Aorta (tissue), 5 donors: ENCODE measurements at regions of chr12 and their contacts with region 1.

Region 1: GRCh38 chr12:9745199-9745598 is 12.3 kb upstream of the CLECL1 start:
- DNase-seq: no peak
- ATAC-seq: no peak
- H3K4me3 ChIP-seq: no peak overlapping the region
- H3K27ac ChIP-seq: no peak overlapping the region
- H3K4me1 ChIP-seq: no peaks in the 10 kb centered on the region
- H3K27me3 ChIP-seq: no peaks in the 10 kb centered on the region

Region 2: GRCh38 chr12:9797722-9798619 is 52.8 kb after region 1 on chr12:
- intact Hi-C with region 1: no loop called
- DNase-seq: no peak
- ATAC-seq: no peak
- H3K4me3 ChIP-seq: no peak overlapping the region
- H3K27ac ChIP-seq: no peak overlapping the region
- H3K4me1 ChIP-seq: peaks cover 0 to 1% of the 10 kb centered on the region in 2 donors
- H3K27me3 ChIP-seq: no peaks in the 10 kb centered on the region

Region 3: GRCh38 chr12:9925708-9926393 is 180.7 kb after region 1 on chr12:
- intact Hi-C with region 1: loop called in 1 of 2 experiments (anchors 5 kb)
- DNase-seq: no peak
- ATAC-seq: no peak
- H3K4me3 ChIP-seq: no peak overlapping the region
- H3K27ac ChIP-seq: no peak overlapping the region
- H3K4me1 ChIP-seq: no peaks in the 10 kb centered on the region
- H3K27me3 ChIP-seq: no peaks in the 10 kb centered on the region